Activated T-helper 1 cell treated with anti-CD3 and anti-CD28 coated beads, Interleukin-12 subunit alpha, Interleukin-12 subunit beta, Interleukin-2, Interleukin-4 antibody, amounts not matched to agents 30 ng/mL and 10 ng/mL and 1 ng/mL, durations not matched to agents 14 hours and 24 hours and 36 hours (primary cell): ENCODE measurements at regions of chr5 and their contacts with region 1.

Region 1: DNA sequence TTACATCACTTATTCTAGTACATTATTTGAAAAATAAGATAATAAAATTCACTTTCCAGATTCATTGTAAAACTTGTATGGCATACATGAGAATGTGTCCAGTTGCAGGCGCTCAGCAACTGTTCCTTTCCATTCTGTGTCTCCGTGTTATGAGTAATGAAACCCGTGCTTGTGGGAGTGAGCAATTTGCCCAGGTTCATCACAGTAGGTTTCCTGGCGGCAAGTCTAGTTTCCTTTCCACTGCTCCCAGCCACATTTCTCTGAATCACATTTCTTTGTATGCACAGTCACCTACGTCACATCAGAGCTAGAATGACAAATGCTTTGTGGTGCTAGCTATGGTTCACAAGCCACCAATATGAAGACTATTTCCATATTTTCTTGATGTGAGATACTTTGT is 39.9 kb downstream of the MOCS2 start:
- DNase-seq: peak; percentile 71
- H3K4me3 Mint-ChIP-seq: peak overlapping the region; percentile 41
- H3K27ac Mint-ChIP-seq: peak overlapping the region; percentile 82
- H3K4me1 Mint-ChIP-seq: peaks cover 41% of the 10 kb centered on the region
- H3K27me3 Mint-ChIP-seq: no peaks in the 10 kb centered on the region

Region 2: GRCh38 chr5:52799983-52800393 is 269.6 kb before region 1 on chr5:
- intact Hi-C with region 1: loop called (anchors 1 kb)
- DNase-seq: peak; percentile 95
- H3K4me3 Mint-ChIP-seq: peak overlapping the region; percentile 90
- H3K27ac Mint-ChIP-seq: peak overlapping the region; percentile 88
- H3K4me1 Mint-ChIP-seq: peaks cover 58% of the 10 kb centered on the region
- H3K27me3 Mint-ChIP-seq: peaks cover 3% of the 10 kb centered on the region

Region 3: GRCh38 chr5:52878656-52879055 is 191.0 kb before region 1 on chr5:
- intact Hi-C with region 1: no loop called
- DNase-seq: no peak
- H3K4me3 Mint-ChIP-seq: no peak overlapping the region
- H3K27ac Mint-ChIP-seq: no peak overlapping the region
- H3K4me1 Mint-ChIP-seq: no peaks in the 10 kb centered on the region
- H3K27me3 Mint-ChIP-seq: peaks cover 7% of the 10 kb centered on the region

Region 4: DNA sequence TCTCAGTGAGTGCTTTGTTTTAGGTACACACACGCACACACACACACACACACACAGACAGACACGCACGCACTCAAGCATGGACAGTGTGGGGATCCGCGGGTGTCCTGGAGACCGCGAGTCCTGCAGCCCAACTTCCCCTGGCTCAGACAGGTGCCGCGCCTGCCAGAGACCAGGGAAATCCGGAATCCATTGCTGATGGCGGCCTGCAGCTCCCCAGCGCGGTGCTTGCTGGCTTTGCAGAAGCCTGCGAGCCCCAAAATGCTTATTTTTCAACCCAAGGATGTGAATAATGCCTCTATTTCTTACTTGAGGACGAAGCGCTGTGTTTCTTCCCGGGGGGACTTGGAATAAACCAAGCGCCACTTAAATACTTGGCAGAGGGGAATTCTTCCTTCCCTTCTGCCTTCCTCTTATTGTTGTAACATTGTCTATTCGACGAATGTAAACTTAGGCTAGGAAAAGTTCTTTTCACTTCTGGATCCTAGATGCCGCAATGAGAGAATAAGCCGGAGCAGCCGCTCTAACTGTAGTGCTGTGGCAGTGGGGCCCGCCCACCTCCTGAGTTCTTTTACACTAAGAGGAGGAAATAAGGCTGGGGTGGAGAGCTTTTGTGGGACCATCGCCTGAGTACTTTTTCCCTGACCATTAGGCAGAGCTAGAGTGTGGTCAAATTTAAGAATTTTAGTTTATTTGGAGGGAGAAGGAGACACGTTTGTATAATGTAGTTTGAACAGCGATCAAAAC is 79.7 kb before region 1 on chr5:
- intact Hi-C with region 1: loop called (anchors 1 kb)
- DNase-seq: peak; percentile 21
- H3K4me3 Mint-ChIP-seq: peak overlapping the region; percentile 83
- H3K27ac Mint-ChIP-seq: peak overlapping the region; percentile 45
- H3K4me1 Mint-ChIP-seq: peaks cover 34% of the 10 kb centered on the region
- H3K27me3 Mint-ChIP-seq: peaks cover 2% of the 10 kb centered on the region

Region 5: GRCh38 chr5:53031695-53032096 is 37.9 kb before region 1 on chr5:
- intact Hi-C with region 1: loop called (anchors 1 kb)
- DNase-seq: peak; percentile 39
- H3K4me3 Mint-ChIP-seq: peak overlapping the region; percentile 57
- H3K27ac Mint-ChIP-seq: peak overlapping the region; percentile 87
- H3K4me1 Mint-ChIP-seq: peaks cover 57% of the 10 kb centered on the region
- H3K27me3 Mint-ChIP-seq: no peaks in the 10 kb centered on the region

Region 6: DNA sequence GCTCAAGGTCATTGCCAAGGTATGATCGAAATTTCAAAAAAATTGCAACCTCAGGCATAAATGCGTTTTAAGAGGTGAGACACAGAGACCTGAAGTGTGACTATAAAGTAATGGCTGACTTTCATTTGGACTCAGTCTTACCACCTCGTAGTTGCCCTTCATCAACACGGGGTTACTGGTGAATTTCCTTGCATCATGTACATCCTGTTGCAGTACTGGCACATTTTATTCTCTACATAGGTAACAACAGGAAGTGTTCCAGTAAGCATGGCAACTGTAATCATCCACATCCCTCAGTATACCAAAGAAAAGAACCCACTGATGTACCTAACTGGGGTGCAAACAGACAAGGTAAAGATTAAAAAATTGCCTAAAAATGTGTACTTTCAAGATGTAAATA is 10.6 kb after region 1 on chr5:
- intact Hi-C with region 1: loop called (anchors 1 kb)
- DNase-seq: no peak
- H3K4me3 Mint-ChIP-seq: peak overlapping the region; percentile 12
- H3K27ac Mint-ChIP-seq: peak overlapping the region; percentile 54
- H3K4me1 Mint-ChIP-seq: peaks cover 49% of the 10 kb centered on the region
- H3K27me3 Mint-ChIP-seq: peaks cover 8% of the 10 kb centered on the region

Region 7: DNA sequence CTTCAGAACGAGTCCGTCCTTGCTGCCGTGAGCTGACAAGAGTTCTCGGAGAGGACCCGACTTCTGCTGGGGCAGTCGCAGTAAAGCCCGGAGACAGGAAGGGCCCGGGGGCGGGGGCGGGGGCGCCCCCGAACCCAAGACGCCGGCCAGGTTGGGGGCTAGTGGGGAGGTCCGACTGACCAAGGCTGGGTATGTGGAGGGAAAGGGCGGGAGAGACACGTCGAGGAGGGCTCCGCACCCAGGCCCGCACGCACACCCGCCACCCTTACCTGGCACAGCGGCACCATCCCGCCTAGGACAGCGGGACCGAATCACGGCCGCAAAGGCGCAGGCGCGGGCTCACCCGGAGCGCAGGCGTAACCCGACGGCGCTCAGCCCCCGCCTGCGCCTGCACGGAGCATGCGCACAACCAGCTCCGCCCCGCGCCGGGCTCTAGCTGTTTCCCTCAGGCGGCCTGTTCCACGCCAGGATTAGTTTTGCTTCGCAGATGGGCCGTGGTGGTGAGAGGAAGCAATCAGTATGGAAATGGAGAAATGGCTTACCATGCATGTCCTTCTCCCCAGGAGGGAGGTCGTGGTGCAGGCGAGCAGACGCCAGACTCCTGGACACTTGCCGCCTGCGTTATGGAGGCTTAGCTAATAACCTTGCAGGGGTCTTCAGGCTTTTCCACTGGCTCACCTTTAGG is 40.0 kb after region 1 on chr5 and contains the start of gene MOCS2:
- intact Hi-C with region 1: loop called (anchors 1 kb)
- DNase-seq: peak; percentile 86
- H3K4me3 Mint-ChIP-seq: peak within 1 kb of the TSS; percentile 91
- H3K27ac Mint-ChIP-seq: peak within 1 kb of the TSS; percentile 84
- H3K4me1 Mint-ChIP-seq: peaks cover 31% of the 10 kb centered on the region
- H3K27me3 Mint-ChIP-seq: no peaks in the 10 kb centered on the region
- total RNA-seq, gene MOCS2: 17.9 and 18.4 TPM in 2 replicates

Region 8: DNA sequence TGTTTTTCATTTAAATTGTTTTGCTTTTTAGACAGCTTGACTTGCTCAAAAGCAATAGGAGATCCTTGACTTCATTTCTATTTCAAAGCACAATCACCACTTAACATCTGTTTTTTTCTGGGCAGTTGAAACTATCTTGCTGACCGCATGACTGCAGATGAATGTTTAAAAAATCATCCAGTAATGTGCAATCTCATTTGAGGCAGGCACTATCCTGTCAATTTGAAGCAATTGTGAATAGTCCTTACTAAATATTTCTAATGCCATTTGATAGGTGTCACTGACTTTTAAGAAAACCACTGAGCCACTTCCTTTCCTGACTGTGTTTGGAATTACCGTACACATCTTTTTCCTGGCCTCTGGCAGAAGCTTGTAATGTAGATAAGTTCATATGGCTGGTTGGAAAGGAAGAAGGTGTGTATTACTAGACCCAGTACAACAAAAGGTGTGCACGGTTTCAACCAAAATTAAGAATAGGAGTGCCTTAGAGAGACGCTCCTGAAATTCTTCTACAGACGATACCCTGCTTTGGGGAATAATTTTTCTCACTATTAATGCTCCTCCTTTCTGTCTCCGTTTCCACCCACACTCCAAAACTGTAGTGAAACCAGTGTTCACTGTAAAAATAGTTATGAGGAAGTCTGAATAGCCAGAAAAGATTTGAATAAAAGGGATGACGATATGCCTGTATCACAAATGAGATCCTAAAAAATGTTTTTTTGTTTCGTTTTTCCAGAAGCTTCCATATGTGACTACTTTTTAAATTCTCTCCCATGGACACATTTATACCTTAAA is 176.6 kb after region 1 on chr5:
- intact Hi-C with region 1: no loop called
- DNase-seq: no peak
- H3K4me3 Mint-ChIP-seq: no peak overlapping the region
- H3K27ac Mint-ChIP-seq: no peak overlapping the region
- H3K4me1 Mint-ChIP-seq: no peaks in the 10 kb centered on the region
- H3K27me3 Mint-ChIP-seq: peaks cover 2% of the 10 kb centered on the region